Activated CD4-positive, alpha-beta T cell treated with anti-CD3 and anti-CD28 coated beads for 36 hours (primary cell): ENCODE measurements at regions of chr1 and their contacts with region 1.

Region 1: DNA sequence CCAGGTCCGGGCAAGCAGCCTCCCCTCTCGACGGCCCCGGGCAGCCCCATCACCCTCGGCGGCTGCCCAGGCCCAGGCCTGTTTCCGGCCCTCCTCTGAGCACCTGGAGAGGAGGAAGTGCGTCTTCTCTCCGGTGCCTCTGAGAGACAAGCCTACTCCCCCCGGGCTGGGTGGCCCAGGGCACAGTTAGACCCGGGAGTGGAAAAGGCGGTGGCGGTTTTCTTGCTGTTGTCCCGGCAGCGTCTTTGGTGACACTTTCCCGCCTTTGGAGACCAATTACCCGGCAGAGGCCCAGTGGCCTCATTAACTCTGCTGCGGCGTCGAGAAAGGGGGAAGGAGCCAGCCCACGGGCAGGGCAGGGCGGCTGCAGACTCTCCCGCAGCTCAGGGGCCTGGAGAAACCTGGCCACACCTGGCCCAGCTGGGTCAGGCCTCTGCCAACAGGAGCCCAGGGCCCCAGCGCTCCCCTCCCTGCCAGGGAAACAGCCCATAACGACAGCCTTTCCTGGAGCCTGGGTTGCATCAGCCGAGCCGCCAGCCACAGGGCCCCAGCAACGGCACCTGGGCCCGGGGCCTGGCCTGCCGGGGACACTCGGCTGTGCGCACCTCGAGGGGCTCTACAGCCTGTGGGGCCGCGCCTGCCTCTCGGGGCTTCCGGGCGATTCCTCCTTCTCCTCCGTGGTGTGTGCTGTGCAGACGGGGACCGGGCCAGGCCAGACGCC is 28.4 kb upstream of the C1orf159 start:
- DNase-seq: peak; percentile 85
- ATAC-seq: peak; percentile 90
- H3K4me3 Mint-ChIP-seq: peak overlapping the region; percentile 34
- H3K27ac Mint-ChIP-seq: peak overlapping the region; percentile 82
- H3K4me1 Mint-ChIP-seq: peaks cover 18% of the 10 kb centered on the region
- H3K27me3 Mint-ChIP-seq: no peaks in the 10 kb centered on the region

Region 2: GRCh38 chr1:975896-976683 is 168.2 kb before region 1 on chr1:
- CTCF ChIA-PET with region 1: no interaction called
- POLR2A ChIA-PET with region 1: no interaction called
- intact Hi-C with region 1: no loop called
- DNase-seq: peak; percentile 88
- ATAC-seq: peak; percentile 97
- H3K4me3 Mint-ChIP-seq: no peak overlapping the region
- H3K27ac Mint-ChIP-seq: no peak overlapping the region
- H3K4me1 Mint-ChIP-seq: peaks cover 6% of the 10 kb centered on the region
- H3K27me3 Mint-ChIP-seq: peaks cover 8% of the 10 kb centered on the region

Region 3: DNA sequence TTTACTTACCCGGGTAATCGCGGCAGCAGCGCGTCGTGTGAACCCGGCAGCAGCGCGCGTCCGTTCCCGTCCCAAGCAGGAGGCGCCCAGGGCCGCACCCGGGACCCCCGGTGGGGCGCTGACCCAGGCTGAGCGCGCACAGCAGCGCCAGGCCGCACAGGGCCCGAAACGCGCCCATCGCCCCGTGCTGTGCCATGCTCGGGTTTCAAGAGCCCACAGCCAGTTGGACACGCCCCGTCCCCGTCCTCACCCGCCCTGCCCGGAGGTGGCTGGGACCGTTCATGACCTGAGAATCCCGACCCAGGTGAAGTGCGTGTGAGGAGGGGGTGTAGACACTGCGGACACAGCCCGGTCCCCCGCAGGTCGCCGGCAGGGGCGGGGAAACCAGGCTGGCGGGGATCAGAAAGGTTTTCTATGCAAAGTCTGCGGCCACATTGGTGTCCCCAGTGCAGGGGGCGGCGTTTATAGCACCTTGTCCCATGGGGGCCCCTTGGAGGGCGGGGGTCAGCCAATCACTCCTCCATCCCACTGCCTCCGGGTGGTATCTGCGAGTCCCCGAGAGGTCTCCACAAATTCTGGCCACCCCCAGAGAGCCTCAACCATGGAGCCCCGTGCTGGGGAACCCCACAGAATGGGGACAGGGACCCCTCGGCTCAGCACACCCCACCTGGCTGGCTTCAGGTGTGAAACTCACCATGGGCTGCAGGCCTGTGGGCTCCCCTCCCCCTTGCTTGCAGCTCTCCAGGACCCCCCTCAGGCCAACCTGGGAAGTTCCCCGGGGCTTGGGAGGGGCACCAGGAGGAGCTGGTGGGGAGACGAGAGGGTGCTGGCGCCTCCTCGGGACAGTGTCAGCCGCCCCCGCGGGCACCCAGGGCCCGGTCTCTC is 62.3 kb after region 1 on chr1 and contains the start of gene TNFRSF18:
- CTCF ChIA-PET with region 1: no interaction called
- POLR2A ChIA-PET with region 1: no interaction called
- intact Hi-C with region 1: loop called in 1 of 2 experiments (anchors 5 kb)
- DNase-seq: peak; percentile 75
- ATAC-seq: peak; percentile 7
- H3K4me3 Mint-ChIP-seq: peak within 1 kb of the TSS; percentile 77
- H3K27ac Mint-ChIP-seq: peak within 1 kb of the TSS; percentile 99
- H3K4me1 Mint-ChIP-seq: peaks cover 31% of the 10 kb centered on the region
- H3K27me3 Mint-ChIP-seq: no peaks in the 10 kb centered on the region
- total RNA-seq, gene TNFRSF18: 95.0 to 164 TPM

Region 4: DNA sequence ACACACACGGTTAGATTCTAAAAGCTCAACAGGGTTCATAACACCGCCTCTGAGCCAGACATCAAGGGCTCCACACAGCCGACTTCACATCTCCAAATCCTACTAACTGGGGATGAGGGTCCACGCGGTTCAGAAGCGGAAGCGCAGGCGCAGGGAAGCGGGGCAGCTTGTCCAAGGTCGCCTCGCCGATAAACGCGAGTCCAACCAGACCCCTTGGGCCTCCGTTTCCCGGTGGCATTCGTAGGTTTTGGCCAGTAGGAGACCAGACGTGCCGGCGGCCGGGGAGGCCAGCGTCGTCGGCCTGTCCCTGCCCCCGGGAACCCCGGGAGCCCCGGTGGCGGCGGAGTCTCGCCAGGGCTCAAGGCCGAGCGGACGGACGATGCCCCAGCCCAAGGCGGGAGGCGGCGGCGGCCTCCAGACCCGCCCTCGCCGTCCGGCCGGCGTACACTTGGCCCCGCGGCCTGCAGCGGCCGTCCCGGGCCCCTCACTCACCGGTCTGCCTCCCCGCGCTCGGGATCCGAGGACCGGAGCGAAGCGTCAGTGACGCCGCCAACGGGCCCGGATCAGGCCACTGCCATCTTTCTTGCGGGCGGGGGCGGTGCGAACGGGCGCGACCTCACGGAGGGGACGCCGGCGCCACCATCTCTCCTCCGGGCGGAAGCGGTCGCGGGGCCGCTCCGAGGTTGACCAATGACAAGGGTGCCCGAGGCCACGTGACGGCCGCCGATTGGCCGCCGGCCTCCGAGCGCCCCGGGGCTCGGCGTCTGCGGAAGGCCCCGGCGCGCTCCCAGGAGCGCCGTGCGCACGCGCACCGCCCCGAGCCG is 87.3 kb after region 1 on chr1 and contains the start of gene SDF4:
- CTCF ChIA-PET with region 1: no interaction called
- POLR2A ChIA-PET with region 1: no interaction called
- intact Hi-C with region 1: no loop called
- DNase-seq: peak; percentile 98
- ATAC-seq: peak; percentile 98
- H3K4me3 Mint-ChIP-seq: peak within 1 kb of the TSS; percentile 94
- H3K27ac Mint-ChIP-seq: peak within 1 kb of the TSS; percentile 91
- H3K4me1 Mint-ChIP-seq: peaks cover 35% of the 10 kb centered on the region
- H3K27me3 Mint-ChIP-seq: no peaks in the 10 kb centered on the region
- total RNA-seq, gene SDF4: 108 to 128 TPM